Head of caudate nucleus (tissue), 42 donors: ENCODE measurements at regions of chr2 and their contacts with region 1.

Region 1: GRCh38 chr2:98649135-98649991 is 41.0 kb downstream of the UNC50 start:
- DNase-seq: peak; percentile 47 to 95 (median 87)

Region 2: GRCh38 chr2:98580656-98581284 is 68.6 kb before region 1 on chr2:
- intact Hi-C with region 1: no loop called
- DNase-seq: peak in 2 of 42 donors; percentile 5 to 6

Region 3: GRCh38 chr2:98592565-98592964 is 56.8 kb before region 1 on chr2:
- intact Hi-C with region 1: no loop called
- DNase-seq: no peak

Region 4: GRCh38 chr2:98702127-98702802 is 52.9 kb after region 1 on chr2:
- intact Hi-C with region 1: no loop called
- DNase-seq: peak in 29 of 42 donors; percentile 12 to 70 (median 41)

Region 5: GRCh38 chr2:98839292-98839691 is 189.9 kb after region 1 on chr2:
- intact Hi-C with region 1: loop called (anchors 2 kb)
- DNase-seq: no peak

Region 6: DNA sequence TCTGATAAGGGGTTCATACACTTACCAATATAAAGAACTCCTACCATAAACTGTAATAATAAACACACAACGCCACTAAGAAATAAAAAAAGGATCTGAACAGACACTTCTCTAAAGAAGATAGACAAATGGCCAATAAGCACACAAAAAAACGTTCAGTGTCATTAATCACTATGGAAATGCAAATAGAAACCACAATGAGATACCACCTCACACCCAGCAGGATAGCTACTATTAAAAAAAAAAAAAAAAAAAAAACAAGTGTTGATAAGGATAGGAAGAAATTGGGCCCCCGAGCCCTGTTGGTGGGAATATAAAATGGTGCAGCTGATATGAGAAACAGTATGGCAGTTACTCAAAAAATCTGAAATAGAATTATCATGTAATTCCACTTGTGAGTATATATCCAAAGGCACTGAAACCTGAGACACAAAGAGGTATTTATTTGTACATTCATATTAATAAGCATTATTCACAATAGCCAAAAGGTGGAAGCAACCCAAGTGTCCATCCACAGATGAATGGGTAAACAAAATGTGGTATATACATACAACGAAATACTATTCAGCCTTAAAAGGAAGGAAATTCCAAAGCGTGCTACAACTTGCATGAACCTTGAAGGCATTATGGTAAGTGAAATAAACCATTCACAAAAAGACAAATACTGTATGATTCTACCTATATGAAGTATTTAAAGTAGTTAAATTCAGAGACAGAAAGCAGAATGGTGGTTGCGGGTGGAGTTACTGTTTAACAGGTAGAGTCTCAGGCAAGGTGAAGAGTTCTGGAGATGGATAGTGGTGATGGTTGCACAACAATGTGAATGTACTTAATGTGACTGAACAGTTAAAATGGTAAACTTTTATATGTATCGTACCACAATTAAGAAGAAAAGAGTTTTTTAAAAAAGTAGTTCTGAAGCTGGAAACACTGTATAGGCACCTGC is 822.6 kb after region 1 on chr2:
- intact Hi-C with region 1: no loop called
- DNase-seq: no peak